Heart left ventricle (tissue), 16 donors: ENCODE measurements at regions of chr3 and their contacts with region 1.

Region 1: GRCh38 chr3:196198771-196199753 is 12.1 kb downstream of the ZDHHC19 start:
- DNase-seq: no peak
- ATAC-seq: no peak
- H3K4me3 ChIP-seq: no peak overlapping the region
- H3K27ac ChIP-seq: no peak overlapping the region
- H3K4me1 ChIP-seq: peaks cover 0 to 12% (median 6%) of the 10 kb centered on the region in 12 donors
- H3K27me3 ChIP-seq: no peaks in the 10 kb centered on the region
- CTCF ChIP-seq: no peak
- POLR2A ChIP-seq: no peak

Region 2: DNA sequence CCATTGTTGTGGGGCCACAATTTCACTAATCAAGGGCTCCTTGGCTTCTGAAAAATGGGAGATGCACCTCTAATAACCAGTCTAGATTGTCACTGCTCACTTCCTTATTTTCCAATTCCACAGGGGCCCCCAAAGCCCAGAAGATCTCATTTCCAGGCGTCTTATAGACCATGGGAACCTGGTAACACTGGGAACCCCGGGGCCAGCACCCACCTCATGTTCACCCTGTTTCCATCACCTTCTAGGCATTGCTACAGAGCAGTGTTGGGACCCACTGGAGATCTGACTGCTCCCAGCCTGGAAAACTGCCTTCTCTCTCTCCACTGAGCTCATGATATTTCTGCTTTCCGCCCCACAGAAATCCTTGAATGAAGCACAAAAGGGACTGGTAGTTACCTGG is 178.7 kb before region 1 on chr3:
- intact Hi-C with region 1: loop called in 3 of 10 experiments (anchors 5 to 10 kb)
- DNase-seq: no peak
- ATAC-seq: no peak
- H3K4me3 ChIP-seq: no peak overlapping the region
- H3K27ac ChIP-seq: no peak overlapping the region
- H3K4me1 ChIP-seq: no peaks in the 10 kb centered on the region
- H3K27me3 ChIP-seq: no peaks in the 10 kb centered on the region
- CTCF ChIP-seq: no peak
- POLR2A ChIP-seq: no peak

Region 3: DNA sequence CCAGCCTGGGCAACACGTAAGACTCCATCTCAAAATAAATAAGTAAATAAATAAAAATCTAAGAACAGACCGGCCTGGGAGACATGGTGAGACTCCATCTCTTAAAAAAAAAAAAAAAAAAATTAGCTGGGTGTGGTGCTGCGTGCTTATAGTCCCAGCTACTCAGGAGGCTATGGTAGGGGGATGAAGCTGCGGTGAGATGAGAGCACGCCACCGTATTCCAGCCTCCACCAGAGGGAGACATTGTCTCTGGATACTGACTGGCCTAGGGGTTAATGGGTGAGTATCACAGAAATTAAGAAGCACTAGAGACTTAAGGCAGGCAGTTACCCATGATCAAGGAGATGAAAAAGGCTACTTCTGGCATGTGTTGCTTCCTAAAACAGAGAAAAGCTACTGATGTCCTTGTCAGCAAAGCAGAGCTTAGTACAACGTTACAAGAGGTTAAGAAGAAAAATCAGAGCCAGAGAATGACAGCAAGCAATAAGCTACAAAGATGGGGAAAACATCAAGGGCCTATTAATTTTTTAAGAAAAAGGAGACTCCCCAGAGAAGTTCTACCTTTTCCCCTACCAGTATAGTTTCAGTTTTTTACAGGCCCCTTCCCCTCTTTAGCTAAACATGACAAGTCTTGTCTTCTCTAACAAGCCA is 125.7 kb before region 1 on chr3:
- intact Hi-C with region 1: loop called (anchors 1 to 5 kb)
- DNase-seq: peak in 3 of 5 donors; percentile 47 to 60 (median 49)
- ATAC-seq: peak; percentile 80 to 94 (median 90)
- H3K4me3 ChIP-seq: no peak overlapping the region
- H3K27ac ChIP-seq: no peak overlapping the region
- H3K4me1 ChIP-seq: peaks cover 0 to 23% (median 0%) of the 10 kb centered on the region in 12 donors
- H3K27me3 ChIP-seq: no peaks in the 10 kb centered on the region
- CTCF ChIP-seq: peak; percentile 48 to 77 (median 75)
- POLR2A ChIP-seq: no peak

Region 4: GRCh38 chr3:196471551-196471950 is 272.5 kb after region 1 on chr3:
- intact Hi-C with region 1: no loop called
- DNase-seq: no peak
- ATAC-seq: no peak
- H3K4me3 ChIP-seq: no peak overlapping the region
- H3K27ac ChIP-seq: no peak overlapping the region
- H3K4me1 ChIP-seq: peaks cover 0 to 4% (median 0%) of the 10 kb centered on the region in 12 donors
- H3K27me3 ChIP-seq: no peaks in the 10 kb centered on the region
- CTCF ChIP-seq: no peak
- POLR2A ChIP-seq: no peak